Vagina (tissue), 2 donors: ENCODE measurements at regions of chr2 and their contacts with region 1.

Region 1: DNA sequence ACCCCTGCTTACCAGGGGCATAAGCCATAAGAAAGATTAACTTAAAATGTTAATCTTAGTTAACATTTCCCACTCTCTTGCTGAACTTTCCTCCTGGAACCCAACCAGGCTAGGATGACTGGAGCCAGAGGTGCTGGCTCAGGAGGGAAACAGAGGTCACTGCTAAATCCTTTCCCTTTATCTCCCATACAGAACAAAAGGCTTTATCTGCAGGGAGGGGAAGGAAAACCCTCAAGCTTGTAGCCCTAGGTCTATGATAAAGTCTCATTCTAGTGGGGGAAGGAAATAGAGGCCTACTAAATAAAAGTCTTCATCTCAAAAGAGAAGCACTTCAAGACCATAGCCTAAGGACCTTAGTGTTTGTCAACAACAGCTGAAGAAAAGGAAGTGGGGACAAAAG is 18.6 kb downstream of the HIBCH start:
- DNase-seq: no peak
- H3K4me3 ChIP-seq: no peak overlapping the region
- H3K27ac ChIP-seq: no peak overlapping the region
- H3K4me1 ChIP-seq: peaks cover 16% of the 10 kb centered on the region
- H3K27me3 ChIP-seq: no peaks in the 10 kb centered on the region
- CTCF ChIP-seq: no peak
- POLR2A ChIP-seq: no peak

Region 2: GRCh38 chr2:191836853-191837769 is 1536.1 kb after region 1 on chr2:
- intact Hi-C with region 1: loop called (anchors 5 kb)
- DNase-seq: no peak
- H3K4me3 ChIP-seq: no peak overlapping the region
- H3K27ac ChIP-seq: no peak overlapping the region
- H3K4me1 ChIP-seq: no peaks in the 10 kb centered on the region
- H3K27me3 ChIP-seq: no peaks in the 10 kb centered on the region
- CTCF ChIP-seq: no peak
- POLR2A ChIP-seq: no peak